Activated CD4-positive, alpha-beta memory T cell treated with anti-CD3 and anti-CD28 coated beads, Interleukin-2, amount 10 ng/mL, durations not matched to agents 7 days and 5 days (primary cell): ENCODE measurements at regions of chr16 and their contacts with region 1.

Region 1: GRCh38 chr16:19907161-19907992 is 22.7 kb upstream of the GPRC5B start:
- DNase-seq: peak; percentile 76
- H3K4me3 Mint-ChIP-seq: no peak overlapping the region
- H3K27ac Mint-ChIP-seq: no peak overlapping the region
- H3K4me1 Mint-ChIP-seq: peaks cover 7% of the 10 kb centered on the region
- H3K27me3 Mint-ChIP-seq: peaks cover 5% of the 10 kb centered on the region

Region 2: DNA sequence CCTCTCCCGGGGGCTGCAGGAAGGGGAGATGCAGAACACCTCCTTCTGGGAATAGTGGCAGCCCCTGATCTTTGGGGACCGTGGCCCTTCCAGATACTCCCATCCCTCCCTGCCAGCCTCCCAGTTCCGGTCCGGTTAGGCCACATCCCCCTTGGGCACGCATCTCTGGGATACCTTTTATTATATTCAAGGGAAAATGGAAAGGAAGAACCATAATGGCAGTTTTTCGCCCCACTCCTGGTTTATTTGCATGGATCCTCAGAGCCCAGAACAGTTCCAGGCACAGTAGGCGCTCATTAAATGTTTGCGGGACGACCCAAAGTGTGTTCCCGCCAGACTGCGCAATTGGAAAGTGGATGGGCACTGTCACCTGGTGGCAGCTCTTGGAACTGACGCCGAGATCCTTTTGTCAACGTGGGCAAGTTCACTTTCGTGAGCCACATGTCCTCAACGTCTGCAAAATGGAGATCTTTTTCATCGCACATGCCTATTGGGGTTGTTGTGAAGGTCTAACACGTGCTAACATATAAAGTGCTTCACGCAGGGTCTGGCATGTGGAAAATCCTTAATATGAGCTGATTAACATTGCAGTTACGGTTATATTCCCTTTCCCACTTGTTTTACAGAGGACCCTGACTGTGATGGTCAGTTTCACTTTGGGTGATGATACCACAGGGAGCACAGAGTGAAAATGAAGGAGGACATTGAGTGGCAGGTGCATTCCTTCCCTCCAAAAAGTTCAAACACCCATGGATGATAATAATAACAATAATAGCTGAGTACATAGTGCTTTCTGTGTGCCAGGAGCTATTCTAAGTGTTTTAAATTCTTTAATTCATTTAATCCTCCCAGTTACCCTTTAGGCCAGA is 21.1 kb before region 1 on chr16:
- CTCF ChIA-PET with region 1: interaction called, 10 read pairs
- POLR2A ChIA-PET with region 1: no interaction called
- DNase-seq: peak; percentile 83
- H3K4me3 Mint-ChIP-seq: peak overlapping the region; percentile 70
- H3K27ac Mint-ChIP-seq: no peak overlapping the region
- H3K4me1 Mint-ChIP-seq: peaks cover 17% of the 10 kb centered on the region
- H3K27me3 Mint-ChIP-seq: peaks cover 31% of the 10 kb centered on the region

Region 3: DNA sequence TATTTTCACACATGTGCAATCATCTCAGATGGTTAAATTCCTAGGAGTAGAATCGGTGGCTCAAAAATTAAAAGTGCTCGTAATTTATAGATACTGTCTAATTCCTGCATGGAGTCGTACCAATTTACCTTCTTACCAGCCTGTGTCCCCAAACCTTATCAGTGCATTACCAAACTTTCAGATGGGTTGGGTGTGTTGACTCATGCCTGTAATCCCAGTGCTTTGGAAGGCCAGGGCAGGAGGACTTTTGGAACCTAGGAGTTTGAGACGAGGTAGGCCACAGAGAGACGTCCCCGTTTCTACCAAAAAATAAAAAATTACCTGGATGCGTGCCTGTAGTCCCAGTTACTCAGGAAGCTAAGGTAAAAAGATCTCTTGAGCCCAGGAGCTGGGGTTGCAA is 11.8 kb after region 1 on chr16:
- CTCF ChIA-PET with region 1: interaction called, 10 read pairs
- POLR2A ChIA-PET with region 1: no interaction called
- DNase-seq: no peak
- H3K4me3 Mint-ChIP-seq: no peak overlapping the region
- H3K27ac Mint-ChIP-seq: no peak overlapping the region
- H3K4me1 Mint-ChIP-seq: no peaks in the 10 kb centered on the region
- H3K27me3 Mint-ChIP-seq: no peaks in the 10 kb centered on the region

Region 4: DNA sequence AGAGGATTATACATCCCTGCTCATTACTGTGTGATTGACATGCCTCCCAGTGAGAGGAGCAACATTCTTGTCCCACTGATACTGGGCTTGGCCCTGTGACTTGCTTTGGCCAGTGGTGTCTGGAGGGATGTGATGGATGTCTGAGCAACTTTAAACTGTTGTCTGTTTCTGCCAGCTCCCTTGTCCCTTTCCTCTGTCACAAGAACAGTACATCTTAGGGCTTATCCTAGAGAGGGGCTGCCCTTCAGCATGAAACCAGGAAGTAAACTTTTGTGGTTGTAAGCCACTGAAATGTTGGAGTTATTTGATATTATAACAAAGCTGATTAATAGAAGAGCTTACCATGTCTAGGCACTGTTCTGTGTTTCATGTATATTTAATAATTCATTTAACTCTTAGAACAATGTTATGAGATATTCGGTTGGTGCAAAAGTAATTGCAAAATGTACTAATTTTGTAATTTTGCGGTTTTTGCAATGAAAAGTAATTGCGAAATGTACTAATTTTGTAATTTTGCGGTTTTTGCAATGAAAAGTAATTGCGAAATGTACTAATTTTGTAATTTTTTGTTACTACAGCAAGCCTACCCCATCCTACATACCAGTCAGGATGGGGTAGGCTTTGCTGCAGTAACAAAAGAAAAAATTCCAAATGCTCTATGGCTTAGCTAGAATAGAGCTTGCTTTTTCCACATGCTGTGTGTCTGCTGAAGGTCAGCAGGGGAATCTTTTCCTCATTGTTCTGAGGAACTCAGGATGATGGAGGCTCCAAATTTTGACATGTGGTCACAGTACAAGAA is 60.4 kb after region 1 on chr16:
- CTCF ChIA-PET with region 1: no interaction called
- POLR2A ChIA-PET with region 1: no interaction called
- DNase-seq: no peak
- H3K4me3 Mint-ChIP-seq: no peak overlapping the region
- H3K27ac Mint-ChIP-seq: no peak overlapping the region
- H3K4me1 Mint-ChIP-seq: no peaks in the 10 kb centered on the region
- H3K27me3 Mint-ChIP-seq: no peaks in the 10 kb centered on the region

Region 5: GRCh38 chr16:19991614-19992013 is 84.2 kb after region 1 on chr16:
- CTCF ChIA-PET with region 1: no interaction called
- POLR2A ChIA-PET with region 1: no interaction called
- DNase-seq: no peak
- H3K4me3 Mint-ChIP-seq: no peak overlapping the region
- H3K27ac Mint-ChIP-seq: no peak overlapping the region
- H3K4me1 Mint-ChIP-seq: no peaks in the 10 kb centered on the region
- H3K27me3 Mint-ChIP-seq: no peaks in the 10 kb centered on the region

Region 6: DNA sequence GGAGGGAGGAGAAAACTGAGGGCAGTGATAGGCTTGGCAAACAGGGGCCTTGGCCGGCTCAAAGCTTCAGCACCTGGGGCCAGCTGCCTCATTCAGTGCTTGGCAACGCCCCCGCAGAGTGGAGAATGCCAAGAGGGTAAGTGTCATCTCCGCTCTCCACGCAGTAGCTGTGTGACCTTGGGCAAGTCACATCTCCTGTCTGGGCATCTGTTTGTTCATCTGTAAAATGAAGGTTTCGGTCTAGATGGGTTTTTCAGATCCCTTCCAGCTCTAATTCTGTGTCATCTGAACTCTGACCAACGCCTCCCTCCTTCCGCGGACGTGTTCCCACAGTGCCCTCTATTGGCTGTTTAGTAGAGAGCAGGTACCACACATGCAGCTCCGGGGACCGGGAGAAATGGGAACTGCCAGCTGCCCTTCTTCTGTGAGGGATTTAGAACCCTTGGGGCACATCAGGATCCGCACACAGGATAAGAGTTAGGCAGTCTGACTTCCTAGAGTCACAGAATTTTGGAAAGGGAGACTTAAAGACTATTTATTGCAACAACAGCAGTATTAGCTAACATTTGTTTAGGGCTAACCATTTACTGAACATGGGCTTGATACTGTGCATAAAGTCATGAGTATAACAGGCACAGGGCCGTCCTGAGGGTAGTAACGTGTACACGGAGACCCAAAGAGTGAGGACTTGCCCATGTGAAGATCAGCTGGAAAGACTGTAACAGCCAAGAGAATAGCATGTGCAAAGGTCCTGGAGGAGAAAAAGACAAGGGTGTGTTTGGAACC is 393.1 kb after region 1 on chr16:
- CTCF ChIA-PET with region 1: interaction called, 56 read pairs
- POLR2A ChIA-PET with region 1: interaction called, 8 read pairs
- DNase-seq: peak; percentile 41
- H3K4me3 Mint-ChIP-seq: no peak overlapping the region
- H3K27ac Mint-ChIP-seq: no peak overlapping the region
- H3K4me1 Mint-ChIP-seq: no peaks in the 10 kb centered on the region
- H3K27me3 Mint-ChIP-seq: peaks cover 3% of the 10 kb centered on the region

Region 7: GRCh38 chr16:20383106-20384029 is 476.0 kb after region 1 on chr16:
- CTCF ChIA-PET with region 1: interaction called, 56 read pairs
- POLR2A ChIA-PET with region 1: no interaction called
- DNase-seq: peak; percentile 46
- H3K4me3 Mint-ChIP-seq: no peak overlapping the region
- H3K27ac Mint-ChIP-seq: no peak overlapping the region
- H3K4me1 Mint-ChIP-seq: no peaks in the 10 kb centered on the region
- H3K27me3 Mint-ChIP-seq: peaks cover 5% of the 10 kb centered on the region